CD4-positive, alpha-beta memory T cell (primary cell): ENCODE measurements at regions of chr3 and their contacts with region 1.

Region 1: GRCh38 chr3:37210230-37210629 is 35.8 kb upstream of the LRRFIP2 start:
- DNase-seq: no peak
- H3K4me3 ChIP-seq: no peak overlapping the region
- H3K4me3 Mint-ChIP-seq: no peak overlapping the region
- H3K27ac ChIP-seq: no peak overlapping the region
- H3K27ac Mint-ChIP-seq: no peak overlapping the region
- H3K4me1 ChIP-seq: peaks cover 5% of the 10 kb centered on the region
- H3K4me1 Mint-ChIP-seq: peaks cover 6 to 13% (median 8%) of the 10 kb centered on the region in 4 donors
- H3K27me3 ChIP-seq: no peaks in the 10 kb centered on the region
- H3K27me3 Mint-ChIP-seq: no peaks in the 10 kb centered on the region

Region 2: DNA sequence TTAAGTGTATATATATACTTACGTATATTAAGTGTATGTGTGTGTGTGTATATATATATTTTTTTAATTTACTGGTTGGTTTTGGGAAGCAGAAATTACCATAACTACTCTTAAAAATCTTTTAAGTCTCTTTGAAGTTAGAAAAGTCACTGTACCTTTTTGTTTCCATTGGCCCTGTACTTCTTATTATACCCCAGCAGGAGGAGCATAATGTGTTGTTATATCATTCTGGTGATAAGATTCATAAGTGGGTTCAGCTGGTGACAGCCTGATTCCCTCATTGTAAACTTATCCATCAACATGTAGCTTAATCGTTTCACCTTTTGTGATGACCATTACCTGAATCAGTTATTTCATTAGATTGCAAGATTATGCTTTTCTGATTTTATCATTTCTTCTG is 186.1 kb before region 1 on chr3:
- CTCF ChIA-PET with region 1: interaction called, 28 read pairs
- POLR2A ChIA-PET with region 1: no interaction called
- intact Hi-C with region 1: loop called (anchors 1 kb)
- DNase-seq: peak in 4 of 5 donors; percentile 1 to 19 (median 6)
- H3K4me3 ChIP-seq: no peak overlapping the region
- H3K4me3 Mint-ChIP-seq: no peak overlapping the region
- H3K27ac ChIP-seq: no peak overlapping the region
- H3K27ac Mint-ChIP-seq: no peak overlapping the region
- H3K4me1 ChIP-seq: no peaks in the 10 kb centered on the region
- H3K4me1 Mint-ChIP-seq: peaks cover 2 to 7% (median 4%) of the 10 kb centered on the region in 4 donors
- H3K27me3 ChIP-seq: no peaks in the 10 kb centered on the region
- H3K27me3 Mint-ChIP-seq: no peaks in the 10 kb centered on the region

Region 3: GRCh38 chr3:37114251-37115145 is 95.7 kb before region 1 on chr3:
- CTCF ChIA-PET with region 1: no interaction called
- POLR2A ChIA-PET with region 1: no interaction called
- intact Hi-C with region 1: loop called (anchors 10 kb)
- DNase-seq: no peak
- H3K4me3 ChIP-seq: no peak overlapping the region
- H3K4me3 Mint-ChIP-seq: no peak overlapping the region
- H3K27ac ChIP-seq: no peak overlapping the region
- H3K27ac Mint-ChIP-seq: no peak overlapping the region
- H3K4me1 ChIP-seq: no peaks in the 10 kb centered on the region
- H3K4me1 Mint-ChIP-seq: peaks cover 0 to 1% (median 0%) of the 10 kb centered on the region in 4 donors
- H3K27me3 ChIP-seq: no peaks in the 10 kb centered on the region
- H3K27me3 Mint-ChIP-seq: no peaks in the 10 kb centered on the region

Region 4: DNA sequence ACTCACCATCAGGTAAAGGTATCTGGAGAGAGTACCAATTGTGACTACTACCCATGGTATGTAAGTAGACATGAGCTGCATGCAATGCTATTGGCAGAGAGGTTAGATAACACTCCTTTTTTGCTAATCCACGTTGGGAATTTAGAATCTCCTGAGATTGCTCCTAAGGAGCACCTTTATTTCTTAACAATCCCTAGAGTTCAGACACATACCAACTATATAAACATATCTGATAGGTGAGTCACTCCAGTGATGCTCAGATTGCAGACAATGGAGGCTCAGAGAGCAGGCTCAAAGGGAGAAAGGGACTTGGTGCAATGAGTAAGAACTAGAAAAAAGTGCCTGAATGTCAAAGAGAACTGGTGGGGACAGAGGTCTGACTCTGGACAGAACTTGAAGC is 11.2 kb after region 1 on chr3:
- CTCF ChIA-PET with region 1: interaction called, 16 read pairs
- POLR2A ChIA-PET with region 1: no interaction called
- intact Hi-C with region 1: no loop called
- DNase-seq: no peak
- H3K4me3 ChIP-seq: no peak overlapping the region
- H3K4me3 Mint-ChIP-seq: no peak overlapping the region
- H3K27ac ChIP-seq: no peak overlapping the region
- H3K27ac Mint-ChIP-seq: peak overlapping the region in 1 of 7 donors; percentile 62
- H3K4me1 ChIP-seq: peaks cover 60% of the 10 kb centered on the region
- H3K4me1 Mint-ChIP-seq: peaks cover 25 to 61% (median 33%) of the 10 kb centered on the region in 4 donors
- H3K27me3 ChIP-seq: no peaks in the 10 kb centered on the region
- H3K27me3 Mint-ChIP-seq: no peaks in the 10 kb centered on the region

Region 5: DNA sequence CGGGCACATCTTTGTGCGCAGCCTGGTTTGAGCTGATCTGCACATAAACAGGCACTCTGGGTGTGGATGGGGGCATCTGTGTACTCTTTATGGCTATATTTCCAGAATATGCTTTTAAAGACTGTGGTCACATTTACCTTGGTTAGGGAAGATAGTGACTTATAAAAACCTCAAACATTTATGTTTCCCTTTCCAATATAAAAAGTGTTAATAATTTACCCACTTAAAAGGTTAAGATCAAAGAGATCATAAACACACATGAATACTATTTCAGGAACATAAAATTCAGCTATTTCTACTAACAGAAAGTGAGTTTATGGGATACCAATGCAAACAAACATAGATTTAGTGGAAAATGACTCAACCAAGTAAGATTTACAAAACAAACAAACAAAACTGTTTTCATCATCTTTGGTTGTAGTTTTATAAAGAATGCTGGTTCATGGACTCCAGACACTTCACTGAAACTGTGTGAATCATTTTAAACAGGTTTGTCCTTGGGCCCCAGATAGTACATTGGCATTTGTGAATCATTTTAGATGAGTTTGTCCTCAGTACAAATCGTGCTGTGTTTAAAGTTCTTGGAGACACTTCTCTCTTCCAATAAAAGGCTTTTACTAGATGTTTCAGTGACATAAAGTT is 398.0 kb after region 1 on chr3:
- CTCF ChIA-PET with region 1: no interaction called
- POLR2A ChIA-PET with region 1: no interaction called
- intact Hi-C with region 1: no loop called
- DNase-seq: no peak
- H3K4me3 ChIP-seq: no peak overlapping the region
- H3K4me3 Mint-ChIP-seq: no peak overlapping the region
- H3K27ac ChIP-seq: no peak overlapping the region
- H3K27ac Mint-ChIP-seq: no peak overlapping the region
- H3K4me1 ChIP-seq: no peaks in the 10 kb centered on the region
- H3K4me1 Mint-ChIP-seq: no peaks in the 10 kb centered on the region
- H3K27me3 ChIP-seq: no peaks in the 10 kb centered on the region
- H3K27me3 Mint-ChIP-seq: peaks cover 0 to 4% of the 10 kb centered on the region in 2 donors